ENCODE measurements at regions of chr10 and their contacts with region 1.

Region 1: DNA sequence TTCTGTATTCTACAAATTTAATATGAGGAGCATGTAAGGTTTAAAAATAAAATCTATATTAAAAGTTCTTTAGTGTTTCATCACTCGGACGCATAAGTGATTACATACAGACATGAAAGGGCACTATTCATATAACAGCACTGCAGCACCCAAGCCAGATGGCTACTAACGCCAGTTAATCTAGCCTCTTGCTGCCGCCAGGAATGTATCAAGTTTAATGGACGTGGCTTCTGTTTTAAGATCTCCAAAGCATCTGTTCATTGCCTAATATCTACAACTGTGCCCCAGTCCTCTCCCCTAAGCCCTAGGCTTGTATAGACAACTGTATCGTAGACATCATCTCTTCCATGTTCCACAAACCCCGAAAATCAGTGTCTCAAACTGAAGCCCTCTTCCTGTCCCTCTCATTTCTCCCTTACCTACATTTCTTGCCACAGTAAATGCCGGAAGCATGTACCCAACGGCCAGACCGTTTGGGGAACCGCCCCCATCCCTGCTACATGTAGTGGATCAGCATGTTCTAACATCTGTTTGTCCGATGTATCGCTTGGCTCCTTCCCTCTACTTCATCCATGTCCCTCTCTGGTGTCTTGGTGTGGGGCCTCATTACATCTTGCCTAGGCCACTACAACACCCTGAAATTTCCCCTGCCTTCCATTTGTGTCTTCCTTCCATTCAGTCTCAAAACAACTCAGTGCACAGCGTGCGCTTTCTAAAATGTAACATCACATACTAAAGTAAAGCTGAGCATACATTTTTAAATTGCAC is 147.5 kb upstream of the RSU1 start:
- DNase-seq: no peak
- H3K4me3 Mint-ChIP-seq: no peak overlapping the region
- H3K27ac Mint-ChIP-seq: no peak overlapping the region
- H3K4me1 Mint-ChIP-seq: peaks cover 14% of the 10 kb centered on the region
- H3K27me3 Mint-ChIP-seq: no peaks in the 10 kb centered on the region

Region 2: GRCh38 chr10:16989826-16990293 is 25.1 kb after region 1 on chr10:
- CTCF ChIA-PET with region 1: no interaction called
- intact Hi-C with region 1: loop called (anchors 2 kb)
- DNase-seq: no peak
- H3K4me3 Mint-ChIP-seq: no peak overlapping the region
- H3K27ac Mint-ChIP-seq: no peak overlapping the region
- H3K4me1 Mint-ChIP-seq: no peaks in the 10 kb centered on the region
- H3K27me3 Mint-ChIP-seq: no peaks in the 10 kb centered on the region

Region 3: GRCh38 chr10:17409170-17409733 is 444.5 kb after region 1 on chr10:
- CTCF ChIA-PET with region 1: no interaction called
- intact Hi-C with region 1: no loop called
- DNase-seq: no peak
- H3K4me3 Mint-ChIP-seq: no peak overlapping the region
- H3K27ac Mint-ChIP-seq: no peak overlapping the region
- H3K4me1 Mint-ChIP-seq: peaks cover 22% of the 10 kb centered on the region
- H3K27me3 Mint-ChIP-seq: no peaks in the 10 kb centered on the region